Sigmoid colon (tissue), 7 donors: ENCODE measurements at regions of chr7 and their contacts with region 1.

Region 1: DNA sequence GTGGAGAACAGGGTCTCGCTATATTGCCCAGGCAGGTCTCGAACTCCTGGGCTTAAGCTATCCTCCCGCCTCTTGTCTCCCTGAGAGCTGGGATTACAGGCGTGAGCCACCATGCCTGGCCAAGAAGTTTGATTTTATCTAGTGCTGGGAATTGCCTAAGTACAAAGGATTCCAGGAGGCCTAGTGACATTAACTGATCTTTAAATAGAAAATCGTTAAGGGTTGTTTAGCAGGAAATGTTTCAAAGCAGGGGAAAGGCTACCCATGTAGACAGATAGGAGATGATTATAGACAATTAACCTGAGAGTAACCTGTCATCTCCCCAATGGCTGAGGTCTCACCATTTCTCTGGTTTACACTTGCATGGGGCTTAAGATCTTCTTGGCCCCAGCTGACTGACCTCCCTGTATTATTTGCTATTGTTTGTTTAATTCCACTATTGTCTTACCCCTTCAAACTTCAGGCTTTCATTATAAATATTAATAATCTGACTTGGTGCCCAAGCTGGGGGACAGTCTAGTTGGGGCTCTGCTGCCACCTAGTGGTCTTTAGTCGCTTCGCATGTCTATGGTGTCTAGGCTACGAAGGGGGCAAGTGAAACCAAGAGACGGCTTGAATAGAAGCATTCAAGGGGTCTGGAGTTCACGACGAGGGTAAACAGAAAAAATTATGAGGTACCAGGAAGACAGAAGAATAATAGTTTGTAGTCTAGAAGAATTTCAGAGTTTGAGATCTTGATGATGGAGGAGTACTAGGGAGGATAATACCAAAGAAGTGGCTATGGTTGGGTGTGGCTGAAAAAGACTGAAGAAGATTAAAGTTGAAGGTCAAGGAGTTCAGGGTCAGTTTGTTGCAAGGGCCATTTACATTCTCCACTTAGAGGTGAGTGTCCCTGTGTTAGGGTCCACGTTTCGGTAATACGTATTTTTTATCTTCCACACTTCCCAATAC is 40.4 kb upstream of the BPGM start:
- DNase-seq: peak; percentile 79
- H3K4me3 ChIP-seq: no peak overlapping the region
- H3K27ac ChIP-seq: no peak overlapping the region
- H3K4me1 ChIP-seq: no peaks in the 10 kb centered on the region
- H3K27me3 ChIP-seq: no peaks in the 10 kb centered on the region
- CTCF ChIP-seq: peak in 3 of 4 experiments; percentile 85 to 90 (median 85)
- EP300 ChIP-seq: no peak
- POLR2A ChIP-seq: no peak

Region 2: DNA sequence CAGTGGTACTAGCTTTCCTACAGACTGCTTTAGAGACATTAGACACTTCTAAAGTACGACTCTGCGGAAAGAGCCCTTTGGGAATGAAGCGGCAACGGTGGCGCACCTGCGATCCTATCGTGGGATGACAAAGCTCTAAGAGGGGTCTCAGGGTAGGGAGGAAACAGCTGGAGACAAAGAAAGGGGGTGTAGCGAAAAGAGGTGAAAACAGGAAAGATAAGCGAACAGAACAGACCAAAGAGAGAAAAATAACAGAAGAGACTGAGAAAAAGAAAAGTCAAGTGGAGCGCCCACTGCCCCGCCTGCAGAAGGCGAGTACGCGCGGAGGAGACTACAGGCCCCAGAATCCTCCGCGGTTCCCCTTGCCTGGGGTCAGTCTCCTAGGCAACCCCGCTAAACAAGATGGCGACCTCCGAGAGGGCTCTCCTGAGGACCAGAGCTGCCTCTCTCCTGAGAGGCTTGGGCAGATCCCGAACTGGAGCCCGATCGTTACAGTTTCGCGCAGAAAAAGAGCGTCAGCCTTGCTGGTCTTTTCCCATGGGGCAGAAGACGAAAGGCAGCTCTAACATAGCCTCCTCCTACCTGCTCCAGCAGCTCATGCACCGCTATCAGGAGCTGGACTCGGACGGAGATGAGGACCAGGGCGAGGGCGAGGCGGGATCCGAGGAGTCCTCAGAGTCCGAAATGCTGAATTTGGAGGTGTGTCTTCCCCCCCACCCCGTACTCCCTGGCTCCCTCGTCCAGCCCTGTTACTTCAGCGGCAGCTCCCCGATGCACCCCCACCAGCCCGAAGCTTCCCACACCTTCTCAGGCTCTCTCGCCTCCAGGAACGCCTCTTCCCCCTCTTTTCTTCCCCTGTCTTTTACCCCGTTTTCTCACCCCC is 479.0 kb before region 1 on chr7 and contains the start of gene LRGUK:
- intact Hi-C with region 1: loop called (anchors 10 kb)
- DNase-seq: peak; percentile 90
- H3K4me3 ChIP-seq: peak within 1 kb of the TSS; percentile 51 to 66 (median 60)
- H3K27ac ChIP-seq: no peak within 1 kb of the TSS
- H3K4me1 ChIP-seq: peaks cover 0 to 12% (median 5%) of the 10 kb centered on the region in 4 donors
- H3K27me3 ChIP-seq: no peaks in the 10 kb centered on the region
- CTCF ChIP-seq: no peak
- EP300 ChIP-seq: no peak
- POLR2A ChIP-seq: no peak
- total RNA-seq, gene LRGUK: 0.28 to 0.71 (median 0.37) TPM

Region 3: DNA sequence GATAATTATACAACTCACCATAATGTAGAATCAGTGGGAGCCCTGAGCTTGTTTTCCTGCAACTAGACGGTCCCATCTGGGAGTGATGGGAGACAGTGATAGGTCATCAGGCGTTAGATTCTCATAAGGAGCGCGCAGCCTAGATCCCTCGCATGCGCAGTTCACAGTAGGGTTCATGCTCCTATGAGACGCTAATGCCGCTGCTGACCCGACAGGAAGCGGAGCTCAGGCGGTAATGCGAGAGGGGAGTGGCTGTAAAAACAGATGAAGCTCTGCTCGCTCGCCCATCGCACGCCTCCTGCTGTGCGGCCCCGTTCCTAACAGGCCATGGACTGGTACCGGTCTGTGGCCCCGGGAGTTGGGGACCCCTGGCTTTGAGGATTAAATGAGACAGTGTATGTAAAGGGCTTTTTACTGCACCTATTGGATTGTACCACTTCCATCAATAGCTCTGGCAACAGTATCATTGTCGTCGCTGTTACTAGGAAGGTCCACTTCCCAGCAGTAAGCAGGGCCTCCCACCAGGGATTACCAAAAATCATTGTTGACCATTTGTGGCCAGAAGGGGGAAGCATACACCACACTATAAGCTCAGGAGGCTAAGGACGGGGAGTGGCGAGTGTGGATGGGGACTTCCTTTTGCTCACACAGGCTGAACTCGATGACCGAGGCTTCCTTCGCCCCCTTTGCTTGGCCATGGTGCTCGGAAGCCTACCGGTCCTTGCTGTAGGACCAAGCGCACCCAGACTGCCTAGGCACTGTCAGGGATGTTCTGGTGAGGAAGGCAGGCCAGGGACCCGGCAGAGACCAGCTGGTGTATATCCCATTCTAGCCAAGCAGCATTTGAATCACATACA is 173.7 kb before region 1 on chr7:
- intact Hi-C with region 1: loop called (anchors 1 kb)
- DNase-seq: peak; percentile 95
- H3K4me3 ChIP-seq: peak overlapping the region; percentile 25 to 44 (median 37)
- H3K27ac ChIP-seq: peak overlapping the region; percentile 77 to 88 (median 83)
- H3K4me1 ChIP-seq: peaks cover 0 to 10% (median 6%) of the 10 kb centered on the region in 4 donors
- H3K27me3 ChIP-seq: no peaks in the 10 kb centered on the region
- CTCF ChIP-seq: peak; percentile 70 to 86 (median 80)
- EP300 ChIP-seq: no peak
- POLR2A ChIP-seq: no peak

Region 4: DNA sequence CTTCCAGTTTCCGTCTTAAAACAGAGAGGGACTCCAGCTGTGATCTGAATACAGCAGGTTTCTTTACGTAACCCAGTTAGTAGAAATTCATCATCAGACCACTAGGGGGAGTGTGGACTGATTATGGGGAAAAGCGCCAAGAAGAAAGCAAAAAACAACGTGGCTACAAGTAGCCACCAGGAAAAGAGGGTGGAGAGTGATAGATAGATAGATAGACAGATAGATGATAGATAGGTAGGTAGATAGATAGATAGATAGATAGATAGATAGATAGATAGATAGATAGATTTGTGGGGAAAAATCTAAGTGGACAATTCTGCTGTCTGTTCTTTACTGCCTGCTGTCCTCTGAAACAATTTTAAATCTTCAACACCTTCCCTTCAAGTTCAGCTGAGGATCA is 91.6 kb before region 1 on chr7:
- intact Hi-C with region 1: loop called (anchors 1 kb)
- DNase-seq: no peak
- H3K4me3 ChIP-seq: no peak overlapping the region
- H3K27ac ChIP-seq: no peak overlapping the region
- H3K4me1 ChIP-seq: peaks cover 0 to 6% (median 0%) of the 10 kb centered on the region in 4 donors
- H3K27me3 ChIP-seq: no peaks in the 10 kb centered on the region
- CTCF ChIP-seq: peak; percentile 49 to 84 (median 80)
- EP300 ChIP-seq: no peak
- POLR2A ChIP-seq: no peak

Region 5: DNA sequence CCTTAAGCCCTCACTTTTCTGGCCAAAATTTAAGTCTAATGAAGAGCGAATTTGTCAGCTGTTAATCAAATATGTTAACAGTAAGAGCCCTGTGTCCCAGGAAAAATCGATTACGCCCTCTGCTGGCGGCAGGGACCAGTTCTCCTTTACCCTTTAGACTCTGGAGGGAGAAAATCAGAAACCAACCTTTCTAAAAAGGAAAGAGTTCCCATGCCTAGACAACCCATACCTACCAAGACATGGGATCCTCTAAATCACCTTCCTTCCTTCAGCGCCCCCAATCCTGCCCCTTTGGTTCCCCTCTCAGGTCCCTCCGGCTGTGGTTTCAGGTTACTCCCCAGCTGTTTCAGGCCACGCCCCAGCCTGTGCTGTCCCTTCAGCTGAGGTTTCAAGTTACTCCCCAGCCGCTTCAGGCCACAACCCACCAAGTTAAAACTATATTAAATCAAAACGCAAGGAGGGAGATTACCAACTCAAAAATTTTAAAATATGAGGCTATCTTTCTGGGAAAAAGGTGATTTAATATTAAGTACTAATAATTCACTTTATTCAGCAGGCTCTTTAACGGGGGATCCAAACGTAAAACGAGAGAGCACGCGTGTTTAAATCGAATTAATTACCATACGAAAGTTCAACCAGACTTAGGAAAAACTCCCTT is 58.7 kb before region 1 on chr7:
- intact Hi-C with region 1: loop called (anchors 2 kb)
- DNase-seq: peak; percentile 87
- H3K4me3 ChIP-seq: peak overlapping the region in 3 of 4 donors; percentile 37 to 42 (median 42)
- H3K27ac ChIP-seq: peak overlapping the region in 3 of 4 donors; percentile 6 to 53 (median 48)
- H3K4me1 ChIP-seq: peaks cover 0 to 12% (median 0%) of the 10 kb centered on the region in 4 donors
- H3K27me3 ChIP-seq: no peaks in the 10 kb centered on the region
- CTCF ChIP-seq: peak; percentile 42 to 83 (median 80)
- EP300 ChIP-seq: no peak
- POLR2A ChIP-seq: no peak